ENCODE measurements at regions of chr12 and their contacts with region 1.

Region 1: GRCh38 chr12:122356192-122356635 is 66.3 kb downstream of the CLIP1 start:
- DNase-seq: peak; percentile 79
- ATAC-seq: peak; percentile 96
- H3K4me3 ChIP-seq: no peak overlapping the region
- H3K27ac ChIP-seq: no peak overlapping the region
- H3K4me1 ChIP-seq: no peaks in the 10 kb centered on the region
- H3K27me3 ChIP-seq: no peaks in the 10 kb centered on the region
- CTCF ChIP-seq: peak; percentile 95

Region 2: GRCh38 chr12:122265931-122266771 is 90.1 kb before region 1 on chr12 and contains the start of gene VPS33A:
- CTCF ChIA-PET with region 1: interaction called, 3 read pairs
- POLR2A ChIA-PET with region 1: no interaction called
- intact Hi-C with region 1: loop called (anchors 5 kb)
- DNase-seq: peak; percentile 99
- ATAC-seq: peak; percentile 87
- H3K4me3 ChIP-seq: peak within 1 kb of the TSS; percentile 84
- H3K27ac ChIP-seq: peak within 1 kb of the TSS; percentile 69
- H3K4me1 ChIP-seq: peaks cover 12% of the 10 kb centered on the region
- H3K27me3 ChIP-seq: no peaks in the 10 kb centered on the region
- CTCF ChIP-seq: no peak
- total RNA-seq, gene VPS33A: 22.2 and 40.8 TPM in 2 replicates

Region 3: DNA sequence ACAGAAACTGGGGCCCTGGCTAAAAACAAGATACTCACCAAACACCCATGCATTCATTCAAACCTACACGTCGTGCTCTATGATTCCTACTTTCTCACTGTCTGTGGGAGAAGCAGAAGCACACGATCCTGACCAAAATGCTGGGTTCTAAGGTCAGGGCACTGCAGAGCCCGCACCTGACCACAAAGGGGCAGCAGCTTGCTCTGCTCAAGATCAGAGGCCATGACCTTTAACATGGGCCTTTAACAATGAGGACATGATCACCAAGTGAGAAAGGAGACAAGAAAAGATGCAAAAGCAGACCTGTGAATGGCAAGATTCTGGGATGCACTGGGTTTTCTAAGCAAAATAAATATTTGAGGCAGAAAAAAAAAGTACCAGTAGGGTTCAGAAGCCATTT is 49.8 kb before region 1 on chr12:
- CTCF ChIA-PET with region 1: no interaction called
- POLR2A ChIA-PET with region 1: no interaction called
- intact Hi-C with region 1: loop called (anchors 10 kb)
- DNase-seq: no peak
- ATAC-seq: no peak
- H3K4me3 ChIP-seq: no peak overlapping the region
- H3K27ac ChIP-seq: no peak overlapping the region
- H3K4me1 ChIP-seq: peaks cover 20% of the 10 kb centered on the region
- H3K27me3 ChIP-seq: no peaks in the 10 kb centered on the region
- CTCF ChIP-seq: 0 out of 2 replicates have a peak, but pooled peaks have one; percentile 30

Region 4: DNA sequence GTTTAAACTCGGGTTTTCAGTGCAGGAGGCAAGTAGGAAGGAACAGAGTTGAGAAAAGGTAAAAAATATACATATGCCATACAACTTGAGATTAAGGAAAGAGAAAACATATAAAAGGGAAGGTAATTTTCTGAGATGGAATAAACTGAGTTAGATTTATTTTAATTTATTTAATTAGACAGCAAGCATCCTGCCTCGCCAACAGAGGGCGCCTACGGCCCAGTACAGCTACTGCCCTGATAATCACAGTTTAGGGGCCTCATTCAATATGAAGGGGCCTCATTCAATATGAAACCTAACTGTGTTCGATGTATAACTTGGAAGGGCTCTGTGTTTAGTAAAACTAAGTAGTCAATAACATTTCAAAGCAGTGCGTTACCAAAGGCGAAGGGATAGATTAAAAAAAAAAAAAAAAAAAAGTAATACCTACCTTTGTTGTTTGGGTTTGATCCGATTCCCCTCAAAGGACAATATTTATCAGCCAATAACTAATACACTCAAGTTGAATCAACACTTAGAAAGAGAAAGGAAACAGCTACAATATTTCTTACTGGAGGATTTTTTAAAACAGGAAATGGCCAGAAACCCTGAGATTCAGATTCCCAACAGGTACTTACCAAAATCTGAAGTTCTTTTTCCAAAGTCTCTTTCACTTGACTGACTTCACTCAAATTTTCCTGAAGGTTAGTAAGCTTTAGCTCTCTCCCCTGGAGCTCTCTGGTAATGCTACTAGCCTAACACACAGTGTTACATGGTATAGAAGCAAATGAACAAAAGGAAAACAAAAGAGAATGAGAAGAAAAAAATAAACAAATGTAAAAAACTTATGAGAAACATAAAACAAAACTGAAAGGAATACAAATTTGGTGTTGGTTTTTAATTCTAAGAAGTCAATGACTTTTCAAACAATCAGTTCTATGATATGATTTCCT is 19.9 kb before region 1 on chr12:
- CTCF ChIA-PET with region 1: interaction called, 11 read pairs
- POLR2A ChIA-PET with region 1: no interaction called
- intact Hi-C with region 1: no loop called
- DNase-seq: peak; percentile 36
- ATAC-seq: peak; percentile 62
- H3K4me3 ChIP-seq: no peak overlapping the region
- H3K27ac ChIP-seq: no peak overlapping the region
- H3K4me1 ChIP-seq: no peaks in the 10 kb centered on the region
- H3K27me3 ChIP-seq: no peaks in the 10 kb centered on the region
- CTCF ChIP-seq: peak; percentile 95

Region 5: DNA sequence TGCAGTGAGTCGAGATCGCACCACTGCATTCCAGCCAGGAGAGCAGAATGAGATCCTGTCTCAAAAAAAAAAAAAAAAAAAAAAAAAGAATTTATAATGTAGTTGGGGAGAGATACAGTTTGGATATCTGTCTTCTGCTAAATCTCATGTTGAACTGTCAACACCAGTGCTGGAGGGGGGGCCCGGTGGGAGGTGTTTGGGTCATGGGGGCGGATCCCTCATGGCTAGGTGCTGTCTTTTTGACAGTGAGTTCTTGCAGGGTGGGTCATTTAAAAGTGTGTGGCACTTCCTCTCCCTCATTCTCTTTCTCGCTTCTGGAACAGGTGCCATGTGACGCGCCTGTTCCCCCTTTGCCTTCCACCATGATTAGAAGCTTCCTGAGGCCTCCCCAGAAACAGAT is 33.5 kb after region 1 on chr12:
- CTCF ChIA-PET with region 1: no interaction called
- POLR2A ChIA-PET with region 1: no interaction called
- intact Hi-C with region 1: loop called (anchors 1 kb)
- DNase-seq: no peak
- ATAC-seq: no peak
- H3K4me3 ChIP-seq: no peak overlapping the region
- H3K27ac ChIP-seq: no peak overlapping the region
- H3K4me1 ChIP-seq: no peaks in the 10 kb centered on the region
- H3K27me3 ChIP-seq: no peaks in the 10 kb centered on the region
- CTCF ChIP-seq: no peak

Region 6: GRCh38 chr12:123200414-123200813 is 844.2 kb after region 1 on chr12:
- CTCF ChIA-PET with region 1: interaction called, 10 read pairs
- POLR2A ChIA-PET with region 1: no interaction called
- intact Hi-C with region 1: no loop called
- DNase-seq: no peak
- ATAC-seq: no peak
- H3K4me3 ChIP-seq: no peak overlapping the region
- H3K27ac ChIP-seq: no peak overlapping the region
- H3K4me1 ChIP-seq: no peaks in the 10 kb centered on the region
- H3K27me3 ChIP-seq: no peaks in the 10 kb centered on the region
- CTCF ChIP-seq: no peak